Naive thymus-derived CD4-positive, alpha-beta T cell (primary cell): ENCODE measurements at regions of chr6 and their contacts with region 1.

Region 1: DNA sequence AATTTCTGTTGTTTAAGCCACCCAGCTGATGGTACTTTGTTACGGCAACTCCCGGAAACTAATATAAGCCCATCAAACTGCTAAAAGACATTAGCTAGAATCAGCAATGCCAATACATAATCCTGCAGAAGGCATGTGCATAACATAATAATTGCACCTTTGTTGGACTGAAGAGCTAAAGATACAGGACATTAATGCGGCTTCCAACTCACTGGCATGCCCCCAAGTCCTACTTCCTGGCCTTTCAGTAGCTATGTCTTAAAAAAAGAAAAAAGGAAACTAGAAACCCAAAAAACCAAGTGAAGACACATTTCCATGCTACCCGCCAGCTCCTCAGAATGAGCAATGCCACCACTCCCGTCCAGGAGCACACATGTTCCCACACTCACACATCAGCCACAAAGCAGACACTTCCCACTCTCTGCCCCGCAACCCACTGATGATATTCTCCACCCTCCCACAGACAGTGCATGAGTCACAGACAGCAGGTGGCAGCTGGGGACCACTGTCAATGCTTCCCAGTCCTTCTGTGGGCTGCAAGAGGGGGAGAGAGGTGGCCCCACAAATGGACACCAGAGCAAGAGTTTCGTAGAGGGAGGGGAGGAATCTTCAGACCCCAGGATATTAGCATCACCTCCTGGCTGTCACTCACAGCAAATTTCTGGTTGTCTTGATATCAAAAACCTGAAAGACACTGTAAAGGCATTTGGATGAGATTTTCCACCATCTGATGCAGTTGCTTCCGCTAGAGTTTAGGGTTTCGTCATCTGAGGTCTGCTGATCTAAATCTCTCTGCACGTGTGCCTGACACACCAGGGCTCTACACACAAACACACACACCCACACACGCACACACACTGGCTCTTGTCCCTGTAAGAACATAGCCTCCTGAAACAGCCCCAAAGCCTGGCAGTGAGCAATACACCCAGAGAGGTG is 32.8 kb downstream of the GFOD1 start:
- DNase-seq: peak; percentile 27 to 83 (median 59)
- ATAC-seq: peak; percentile 88
- H3K4me3 ChIP-seq: peak overlapping the region; percentile 21
- H3K4me3 Mint-ChIP-seq: peak overlapping the region; percentile 63 to 85 (median 74)
- H3K27ac ChIP-seq: peak overlapping the region; percentile 16
- H3K27ac Mint-ChIP-seq: peak overlapping the region; percentile 66 to 93 (median 84)
- H3K4me1 ChIP-seq: peaks cover 17 to 23% of the 10 kb centered on the region in 2 donors
- H3K4me1 Mint-ChIP-seq: peaks cover 15 to 58% (median 28%) of the 10 kb centered on the region in 7 donors
- H3K27me3 ChIP-seq: no peaks in the 10 kb centered on the region
- H3K27me3 Mint-ChIP-seq: no peaks in the 10 kb centered on the region

Region 2: DNA sequence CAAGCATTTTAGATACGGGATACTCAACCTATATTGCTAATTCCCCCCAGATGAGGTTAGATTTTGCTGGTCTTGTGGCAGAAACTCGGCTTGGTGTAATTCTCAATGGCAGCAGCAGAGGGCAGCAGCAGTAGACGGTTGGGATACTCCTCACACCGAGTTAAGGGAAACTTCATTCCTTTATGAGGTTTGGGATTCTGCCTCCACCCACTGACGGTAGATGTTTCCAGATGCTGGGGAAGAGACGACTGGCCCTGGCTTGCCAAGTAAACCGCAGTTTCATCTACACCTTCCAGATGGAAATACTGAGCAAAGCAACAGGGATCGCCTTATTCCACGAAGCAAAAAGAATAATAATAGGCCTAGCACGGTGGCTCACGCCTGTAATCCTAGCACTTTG is 118.0 kb before region 1 on chr6:
- CTCF ChIA-PET with region 1: interaction called, 3 read pairs
- POLR2A ChIA-PET with region 1: no interaction called
- intact Hi-C with region 1: loop called in 1 of 2 experiments (anchors 1 kb)
- DNase-seq: peak; percentile 39 to 80 (median 60)
- ATAC-seq: peak; percentile 83
- H3K4me3 ChIP-seq: no peak overlapping the region
- H3K4me3 Mint-ChIP-seq: peak overlapping the region in 1 of 10 donors; percentile 14
- H3K27ac ChIP-seq: no peak overlapping the region
- H3K27ac Mint-ChIP-seq: no peak overlapping the region
- H3K4me1 ChIP-seq: no peaks in the 10 kb centered on the region
- H3K4me1 Mint-ChIP-seq: peaks cover 3 to 42% (median 8%) of the 10 kb centered on the region in 7 donors
- H3K27me3 ChIP-seq: no peaks in the 10 kb centered on the region
- H3K27me3 Mint-ChIP-seq: peaks cover 0 to 2% (median 0%) of the 10 kb centered on the region in 5 donors

Region 3: DNA sequence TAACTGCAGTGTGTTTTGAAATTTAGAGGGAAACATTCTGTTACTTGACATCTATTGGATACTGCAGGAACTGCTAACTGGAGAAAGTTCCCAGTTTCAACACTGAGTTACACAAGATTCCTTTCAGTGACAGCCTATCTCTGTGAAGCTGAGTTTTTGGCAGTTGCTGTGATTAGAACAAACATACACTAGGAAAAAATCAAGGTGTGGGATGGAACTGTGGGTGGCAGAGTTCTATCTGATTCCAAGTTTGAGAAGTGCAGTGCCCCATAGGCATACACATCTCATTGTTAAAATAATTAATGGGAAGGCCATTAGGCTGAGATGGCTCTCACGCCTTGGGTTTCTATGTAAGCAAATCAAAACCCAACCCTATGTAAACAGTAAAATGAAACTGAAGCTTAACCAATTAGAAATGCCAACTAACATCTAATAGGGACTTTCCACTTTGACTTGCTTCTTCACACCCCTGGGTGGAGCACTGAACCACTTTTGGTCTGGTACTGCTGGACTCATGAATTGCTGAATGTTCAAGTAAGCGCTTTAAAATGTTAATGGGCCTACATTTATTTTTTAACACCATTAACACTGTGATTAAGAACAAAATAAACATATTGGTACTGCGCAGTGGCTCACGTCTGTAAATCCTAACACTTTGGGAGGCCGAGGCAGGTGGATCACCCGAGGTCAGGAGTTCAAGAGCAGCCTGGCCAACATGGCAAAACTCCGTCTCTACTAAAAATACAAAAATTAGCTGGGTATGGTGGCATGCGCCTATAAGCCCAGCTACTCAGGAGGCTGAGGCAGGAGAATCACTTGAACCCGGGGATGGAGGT is 71.0 kb before region 1 on chr6:
- CTCF ChIA-PET with region 1: no interaction called
- POLR2A ChIA-PET with region 1: no interaction called
- intact Hi-C with region 1: no loop called
- DNase-seq: no peak
- ATAC-seq: peak; percentile 93
- H3K4me3 ChIP-seq: no peak overlapping the region
- H3K4me3 Mint-ChIP-seq: peak overlapping the region in 1 of 10 donors; percentile 23
- H3K27ac ChIP-seq: no peak overlapping the region
- H3K27ac Mint-ChIP-seq: peak overlapping the region in 2 of 9 donors; percentile 31 to 58
- H3K4me1 ChIP-seq: peaks cover 0 to 8% of the 10 kb centered on the region in 2 donors
- H3K4me1 Mint-ChIP-seq: peaks cover 0 to 30% (median 0%) of the 10 kb centered on the region in 7 donors
- H3K27me3 ChIP-seq: no peaks in the 10 kb centered on the region
- H3K27me3 Mint-ChIP-seq: no peaks in the 10 kb centered on the region

Region 4: DNA sequence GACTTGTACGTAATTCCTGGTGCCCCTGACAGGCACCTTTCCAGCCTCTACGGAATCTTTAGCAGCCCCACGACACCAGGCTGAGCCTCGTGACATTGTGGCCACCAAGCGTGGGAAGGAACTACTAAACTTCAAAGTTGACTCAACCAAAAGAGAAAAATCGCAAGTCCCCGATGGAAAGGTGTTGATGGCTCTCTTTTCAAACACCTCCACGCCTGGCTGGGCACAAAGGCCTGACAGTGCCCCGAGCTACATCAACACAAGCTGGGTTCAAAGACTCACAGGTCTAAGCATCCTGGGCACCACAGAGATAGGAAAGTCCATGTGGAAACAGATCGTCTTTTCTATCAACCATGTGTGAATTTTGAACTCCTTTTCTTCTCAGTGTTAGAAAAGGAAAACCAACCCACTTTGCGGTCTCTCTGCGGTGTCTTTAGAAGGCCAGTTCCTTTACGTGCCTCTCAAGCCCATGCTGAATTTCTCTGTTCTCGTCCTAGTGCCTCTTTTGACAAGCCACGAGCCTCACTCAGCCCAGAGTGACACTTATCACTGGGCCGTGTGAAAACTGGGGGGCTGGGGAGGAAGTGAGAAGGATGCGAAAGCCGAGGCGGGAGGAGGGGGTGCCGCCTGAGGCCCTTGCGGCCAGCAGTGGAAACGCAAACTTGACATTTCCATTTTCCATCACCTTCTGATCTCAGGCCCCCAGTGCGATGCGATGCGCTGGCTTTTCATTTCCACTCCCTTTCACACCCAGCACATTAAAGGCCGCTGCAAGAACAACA is 26.6 kb before region 1 on chr6:
- CTCF ChIA-PET with region 1: interaction called, 3 read pairs
- POLR2A ChIA-PET with region 1: no interaction called
- intact Hi-C with region 1: loop called in 1 of 2 experiments (anchors 1 kb)
- DNase-seq: peak; percentile 29 to 76 (median 52)
- ATAC-seq: peak; percentile 86
- H3K4me3 ChIP-seq: peak overlapping the region; percentile 40
- H3K4me3 Mint-ChIP-seq: peak overlapping the region; percentile 62 to 92 (median 80)
- H3K27ac ChIP-seq: peak overlapping the region; percentile 9
- H3K27ac Mint-ChIP-seq: peak overlapping the region; percentile 1 to 85 (median 79)
- H3K4me1 ChIP-seq: peaks cover 26 to 55% of the 10 kb centered on the region in 2 donors
- H3K4me1 Mint-ChIP-seq: peaks cover 21 to 78% (median 49%) of the 10 kb centered on the region in 7 donors
- H3K27me3 ChIP-seq: no peaks in the 10 kb centered on the region
- H3K27me3 Mint-ChIP-seq: peaks cover 0 to 2% (median 0%) of the 10 kb centered on the region in 5 donors

Region 5: DNA sequence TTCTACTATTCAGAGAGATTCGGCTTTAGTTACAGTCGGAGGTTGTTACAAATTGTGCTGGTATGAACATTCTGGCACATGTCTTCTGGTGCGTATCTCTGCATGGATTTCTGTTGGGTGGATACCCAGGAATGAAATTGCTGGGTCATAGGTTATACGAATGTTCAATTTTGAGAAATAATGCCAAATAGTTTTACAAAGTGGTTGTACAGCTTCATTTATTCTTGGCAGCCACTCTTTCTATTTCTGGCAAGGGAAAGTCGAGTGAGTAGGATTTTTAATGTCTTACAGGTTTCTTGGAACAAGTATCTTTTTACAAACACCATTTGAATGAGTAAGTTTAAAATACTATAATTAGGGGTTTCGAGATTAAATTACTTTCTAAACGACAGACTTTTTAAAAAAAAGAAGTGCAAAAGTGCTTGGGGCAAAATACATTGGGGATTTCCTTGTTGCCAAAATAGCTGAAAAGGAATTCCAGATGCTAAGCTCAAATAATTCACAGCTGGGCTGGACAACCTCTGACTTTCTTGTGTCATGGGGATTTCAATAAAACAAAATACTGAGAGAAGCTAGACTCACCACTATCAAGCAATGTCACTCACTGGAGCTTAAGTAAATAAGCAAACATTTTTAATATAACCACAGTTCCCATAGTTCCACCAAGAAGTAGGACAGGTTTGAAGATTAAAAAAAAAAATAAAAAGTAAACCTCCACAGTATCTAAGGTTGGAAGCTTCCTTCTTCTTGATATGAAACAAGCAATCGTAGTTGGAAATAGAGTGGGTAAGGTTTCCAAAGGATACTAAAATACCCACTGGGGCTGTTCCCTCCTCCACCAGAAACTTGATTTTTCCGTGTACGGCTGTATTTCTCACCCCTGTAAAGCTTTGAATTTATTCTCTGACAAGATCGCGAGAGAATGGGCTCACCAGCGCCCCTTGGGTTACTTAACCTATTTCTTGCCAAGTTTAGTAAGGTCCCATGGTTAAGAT is 54.5 kb after region 1 on chr6:
- CTCF ChIA-PET with region 1: no interaction called
- POLR2A ChIA-PET with region 1: no interaction called
- intact Hi-C with region 1: no loop called
- DNase-seq: no peak
- ATAC-seq: no peak
- H3K4me3 ChIP-seq: no peak overlapping the region
- H3K4me3 Mint-ChIP-seq: no peak overlapping the region
- H3K27ac ChIP-seq: no peak overlapping the region
- H3K27ac Mint-ChIP-seq: no peak overlapping the region
- H3K4me1 ChIP-seq: no peaks in the 10 kb centered on the region
- H3K4me1 Mint-ChIP-seq: peaks cover 0 to 2% (median 0%) of the 10 kb centered on the region in 7 donors
- H3K27me3 ChIP-seq: no peaks in the 10 kb centered on the region
- H3K27me3 Mint-ChIP-seq: peaks cover 0 to 23% (median 0%) of the 10 kb centered on the region in 5 donors

Region 6: DNA sequence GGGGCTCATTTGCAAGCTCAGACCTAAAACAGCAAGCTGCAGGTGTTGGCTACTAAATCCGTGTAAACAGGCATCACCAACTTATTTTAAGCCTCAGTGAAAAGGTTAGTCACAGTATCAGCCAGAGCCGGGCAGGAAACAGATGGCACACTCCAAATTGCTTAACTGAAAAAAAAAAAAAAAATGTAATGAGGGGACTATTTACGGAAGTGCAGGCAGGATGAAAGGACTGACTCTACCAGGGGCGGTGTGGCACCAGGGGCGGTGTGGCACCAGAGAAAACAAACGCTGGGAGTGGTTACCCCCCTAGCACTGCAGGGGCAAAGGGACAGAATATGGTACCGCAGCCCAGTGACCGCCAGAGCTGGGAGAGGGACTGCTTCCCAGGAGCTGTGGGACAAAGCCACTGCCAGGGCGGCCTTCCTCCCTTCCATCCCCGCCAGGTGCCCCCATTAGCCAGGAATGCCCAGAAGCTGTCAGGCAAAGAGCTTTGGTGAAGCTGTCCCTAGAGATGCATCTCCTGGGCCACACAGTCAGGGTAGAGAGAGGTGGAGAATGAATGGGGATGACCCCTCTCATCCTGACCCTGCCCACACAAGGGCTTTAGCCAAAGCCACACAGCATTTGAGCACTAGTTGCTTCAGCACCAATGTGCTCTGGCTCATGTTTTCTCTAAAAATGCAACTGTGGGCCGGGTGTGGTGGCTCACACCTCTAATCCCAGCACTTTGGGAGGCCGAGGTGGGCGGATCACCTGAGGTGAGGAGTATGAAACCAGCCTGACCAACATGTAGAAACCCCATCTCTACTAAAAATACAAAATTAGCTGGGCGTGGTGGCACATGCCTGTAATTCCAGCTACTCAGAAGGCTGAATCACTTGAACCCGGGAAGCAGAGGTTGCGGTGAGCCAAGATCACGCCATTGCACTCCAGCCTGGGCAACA is 72.4 kb after region 1 on chr6:
- CTCF ChIA-PET with region 1: no interaction called
- POLR2A ChIA-PET with region 1: interaction called, 3 read pairs
- intact Hi-C with region 1: loop called in 1 of 2 experiments (anchors 1 kb)
- DNase-seq: peak in 7 of 9 donors; percentile 43 to 70 (median 54)
- ATAC-seq: peak; percentile 94
- H3K4me3 ChIP-seq: no peak overlapping the region
- H3K4me3 Mint-ChIP-seq: peak overlapping the region in 7 of 10 donors; percentile 6 to 50 (median 29)
- H3K27ac ChIP-seq: no peak overlapping the region
- H3K27ac Mint-ChIP-seq: peak overlapping the region; percentile 23 to 81 (median 56)
- H3K4me1 ChIP-seq: peaks cover 0 to 13% of the 10 kb centered on the region in 2 donors
- H3K4me1 Mint-ChIP-seq: peaks cover 9 to 27% (median 15%) of the 10 kb centered on the region in 7 donors
- H3K27me3 ChIP-seq: no peaks in the 10 kb centered on the region
- H3K27me3 Mint-ChIP-seq: no peaks in the 10 kb centered on the region

Region 7: DNA sequence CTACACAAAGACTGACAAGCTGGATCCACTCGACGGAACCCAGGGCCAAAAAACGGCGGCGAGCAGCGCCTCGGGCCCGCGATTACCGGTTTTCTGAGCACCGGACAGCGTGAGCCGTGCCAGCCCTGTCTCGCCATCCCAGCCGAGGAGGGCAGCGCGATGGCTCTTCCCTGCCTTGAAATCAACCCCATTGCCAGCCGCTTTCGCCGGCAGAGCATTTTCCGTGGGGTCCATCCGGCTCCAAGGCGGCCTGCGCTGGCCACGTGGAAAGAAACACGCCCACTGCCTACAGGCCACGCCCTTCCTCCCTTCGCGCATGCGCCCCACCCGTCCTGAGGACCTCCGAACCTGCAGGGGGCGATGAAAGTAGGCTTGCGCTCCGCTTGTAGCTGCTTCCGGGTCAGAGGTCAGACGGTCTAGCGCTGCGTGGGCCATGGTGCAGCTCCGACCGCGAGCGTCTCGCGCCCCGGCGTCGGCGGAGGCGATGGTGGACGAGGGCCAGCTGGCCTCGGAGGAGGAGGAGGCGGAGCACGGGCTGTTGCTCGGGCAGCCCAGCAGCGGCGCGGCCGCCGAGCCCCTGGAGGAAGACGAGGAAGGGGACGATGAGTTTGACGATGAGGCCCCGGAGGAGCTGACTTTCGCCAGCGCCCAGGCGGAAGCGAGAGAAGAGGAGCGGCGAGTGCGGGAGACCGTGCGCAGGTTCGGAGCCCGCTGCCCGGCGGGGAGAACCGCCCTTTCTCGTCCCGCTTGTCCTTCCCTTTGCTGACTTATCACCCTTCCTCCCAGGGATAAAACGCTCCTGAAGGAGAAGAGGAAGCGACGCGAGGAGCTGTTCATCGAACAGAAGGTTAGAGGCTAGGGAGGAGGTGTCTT is 160.6 kb after region 1 on chr6 and contains the start of gene NOL7:
- CTCF ChIA-PET with region 1: interaction called, 7 read pairs
- POLR2A ChIA-PET with region 1: no interaction called
- intact Hi-C with region 1: loop called (anchors 2 kb)
- DNase-seq: peak; percentile 96 to 99 (median 98)
- ATAC-seq: peak; percentile 98
- H3K4me3 ChIP-seq: peak within 1 kb of the TSS; percentile 85
- H3K4me3 Mint-ChIP-seq: peak within 1 kb of the TSS; percentile 82 to 98 (median 94)
- H3K27ac ChIP-seq: peak within 1 kb of the TSS; percentile 81
- H3K27ac Mint-ChIP-seq: peak within 1 kb of the TSS; percentile 85 to 97 (median 94)
- H3K4me1 ChIP-seq: peaks cover 8 to 26% of the 10 kb centered on the region in 2 donors
- H3K4me1 Mint-ChIP-seq: peaks cover 25 to 55% (median 47%) of the 10 kb centered on the region in 7 donors
- H3K27me3 ChIP-seq: no peaks in the 10 kb centered on the region
- H3K27me3 Mint-ChIP-seq: peaks cover 0 to 2% (median 0%) of the 10 kb centered on the region in 5 donors
- total RNA-seq, gene NOL7: 49.1 to 65.2 (median 62.1) TPM

Region 8: DNA sequence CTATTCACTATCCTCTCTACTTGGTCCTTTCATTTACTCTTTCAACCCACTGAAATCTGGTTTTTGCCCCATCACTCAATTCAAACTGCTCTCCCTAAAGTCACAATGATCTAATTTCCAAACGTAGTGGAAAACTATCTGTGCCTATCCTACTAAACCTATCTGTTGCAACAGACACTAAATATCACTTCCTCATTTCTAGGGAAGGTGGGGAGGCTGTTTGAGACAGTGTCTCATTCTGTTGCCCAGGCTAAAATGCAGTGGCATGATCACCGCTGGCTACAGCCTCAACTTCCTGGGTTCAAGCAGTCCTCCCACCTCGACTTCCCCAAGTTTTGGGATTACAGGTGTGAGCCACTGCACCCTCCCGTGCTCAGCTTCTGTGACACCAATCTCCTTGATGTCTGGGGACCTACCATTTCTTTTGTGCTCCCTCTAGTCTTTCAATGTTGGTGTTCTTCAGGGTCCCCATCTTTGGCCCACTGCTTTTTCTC is 248.3 kb after region 1 on chr6:
- CTCF ChIA-PET with region 1: no interaction called
- POLR2A ChIA-PET with region 1: no interaction called
- intact Hi-C with region 1: no loop called
- DNase-seq: no peak
- ATAC-seq: peak; percentile 65
- H3K4me3 ChIP-seq: no peak overlapping the region
- H3K4me3 Mint-ChIP-seq: no peak overlapping the region
- H3K27ac ChIP-seq: no peak overlapping the region
- H3K27ac Mint-ChIP-seq: no peak overlapping the region
- H3K4me1 ChIP-seq: peaks cover 15 to 25% of the 10 kb centered on the region in 2 donors
- H3K4me1 Mint-ChIP-seq: peaks cover 21 to 53% (median 42%) of the 10 kb centered on the region in 7 donors
- H3K27me3 ChIP-seq: no peaks in the 10 kb centered on the region
- H3K27me3 Mint-ChIP-seq: no peaks in the 10 kb centered on the region

Region 9: DNA sequence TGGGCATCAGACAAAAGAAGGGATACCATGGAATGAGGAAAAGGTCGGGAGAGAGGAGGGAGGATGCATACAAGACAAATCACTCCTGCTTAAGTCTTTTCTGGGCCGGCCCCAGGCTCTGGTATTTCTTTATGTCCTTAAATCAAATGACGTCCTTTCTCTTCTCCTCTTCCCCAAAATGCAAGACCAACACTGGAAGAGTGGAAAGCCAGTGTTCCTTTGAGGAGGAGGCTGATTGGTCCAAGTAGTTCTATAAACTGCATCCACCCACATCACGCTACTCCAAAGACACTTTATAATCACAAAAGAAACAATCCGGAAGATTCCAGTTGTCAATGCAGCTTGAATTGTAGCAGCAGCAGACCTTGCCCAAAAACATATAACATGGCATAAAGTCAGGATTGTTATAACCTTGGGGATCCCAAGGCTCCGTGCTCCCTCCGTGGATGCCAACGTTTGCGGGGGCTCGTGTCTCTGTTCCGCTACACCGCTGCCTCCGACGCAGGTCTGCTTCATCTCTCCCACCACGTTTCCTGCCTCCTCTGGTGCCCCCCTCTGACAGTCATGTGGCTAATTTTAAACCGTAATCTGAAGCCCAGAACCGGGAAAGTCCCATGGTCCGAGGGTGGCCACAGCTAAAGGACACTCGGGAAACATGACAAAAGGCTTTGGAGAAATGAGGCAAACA is 312.7 kb after region 1 on chr6:
- CTCF ChIA-PET with region 1: interaction called, 4 read pairs
- POLR2A ChIA-PET with region 1: no interaction called
- intact Hi-C with region 1: loop called in 1 of 2 experiments (anchors 1 kb)
- DNase-seq: peak in 8 of 9 donors; percentile 12 to 48 (median 30)
- ATAC-seq: peak; percentile 66
- H3K4me3 ChIP-seq: peak overlapping the region; percentile 51
- H3K4me3 Mint-ChIP-seq: peak overlapping the region; percentile 53 to 86 (median 76)
- H3K27ac ChIP-seq: no peak overlapping the region
- H3K27ac Mint-ChIP-seq: peak overlapping the region in 7 of 9 donors; percentile 6 to 92 (median 59)
- H3K4me1 ChIP-seq: peaks cover 8 to 13% of the 10 kb centered on the region in 2 donors
- H3K4me1 Mint-ChIP-seq: peaks cover 10 to 49% (median 30%) of the 10 kb centered on the region in 7 donors
- H3K27me3 ChIP-seq: no peaks in the 10 kb centered on the region
- H3K27me3 Mint-ChIP-seq: peaks cover 0 to 6% (median 0%) of the 10 kb centered on the region in 5 donors

Region 10: DNA sequence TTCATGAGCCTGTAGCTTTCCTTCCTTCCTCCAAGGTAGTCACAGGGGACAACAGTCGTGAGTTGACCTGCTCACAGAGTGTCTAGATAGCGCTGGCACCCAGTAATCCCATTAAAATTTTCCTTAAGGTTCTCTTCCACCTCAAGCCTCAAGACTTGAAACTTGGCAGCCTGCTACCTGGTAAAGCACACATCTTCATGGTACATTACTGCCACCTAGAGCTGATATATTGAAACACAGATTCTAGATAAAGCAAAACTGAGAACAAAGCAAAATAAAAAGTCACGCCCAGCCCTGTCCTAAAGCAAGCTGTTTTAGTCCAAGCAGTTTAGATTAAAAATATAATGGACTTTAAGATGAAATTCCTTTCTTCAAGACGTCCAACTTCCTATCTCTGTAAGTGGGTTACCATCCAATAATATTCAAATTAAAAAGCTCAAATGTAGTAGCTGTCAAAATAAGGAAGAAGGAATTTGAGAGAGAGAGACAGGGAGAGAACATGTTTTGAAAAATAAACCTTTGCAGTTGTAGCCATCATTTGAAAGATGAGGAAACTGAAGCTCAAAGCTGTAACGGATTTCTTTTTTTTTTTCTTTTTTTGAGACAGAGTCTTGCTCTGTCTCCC is 612.3 kb after region 1 on chr6:
- CTCF ChIA-PET with region 1: no interaction called
- POLR2A ChIA-PET with region 1: no interaction called
- intact Hi-C with region 1: loop called in 1 of 2 experiments (anchors 1 kb)
- DNase-seq: peak in 7 of 9 donors; percentile 32 to 56 (median 43)
- ATAC-seq: peak; percentile 90
- H3K4me3 ChIP-seq: no peak overlapping the region
- H3K4me3 Mint-ChIP-seq: no peak overlapping the region
- H3K27ac ChIP-seq: no peak overlapping the region
- H3K27ac Mint-ChIP-seq: peak overlapping the region in 1 of 9 donors; percentile 82
- H3K4me1 ChIP-seq: no peaks in the 10 kb centered on the region
- H3K4me1 Mint-ChIP-seq: peaks cover 0 to 21% (median 0%) of the 10 kb centered on the region in 7 donors
- H3K27me3 ChIP-seq: no peaks in the 10 kb centered on the region
- H3K27me3 Mint-ChIP-seq: peaks cover 0 to 18% (median 14%) of the 10 kb centered on the region in 5 donors